H1 (cell line): ENCODE measurements at regions of chr11 and their contacts with region 1.

Region 1: GRCh38 chr11:44804449-44805437 is 78.0 kb downstream of the TSPAN18 start:
- DNase-seq: no peak
- H3K4me3 ChIP-seq: no peak overlapping the region
- H3K27ac ChIP-seq: no peak overlapping the region
- H3K4me1 ChIP-seq: peaks cover 0 to 17% (median 11%) of the 10 kb centered on the region in 4 experiments; a peak in 5 of 7 replicates
- H3K27me3 ChIP-seq: 0 out of 7 replicates have a peak, but pooled peaks cover 0 to 2% (median 0%) of the 10 kb centered on the region in 4 experiments
- CTCF ChIP-seq: no peak
- EP300 ChIP-seq: no peak
- POLR2A ChIP-seq: no peak
- RAD21 ChIP-seq: no peak

Region 2: GRCh38 chr11:44793350-44794090 is 11.2 kb before region 1 on chr11:
- CTCF ChIA-PET with region 1: interaction called, 11 read pairs
- POLR2A ChIA-PET with region 1: interaction called, 3 read pairs
- DNase-seq: no peak
- H3K4me3 ChIP-seq: no peak overlapping the region
- H3K27ac ChIP-seq: no peak overlapping the region
- H3K4me1 ChIP-seq: peaks cover 10 to 23% (median 17%) of the 10 kb centered on the region in 4 experiments
- H3K27me3 ChIP-seq: peaks cover 0 to 4% (median 0%) of the 10 kb centered on the region in 4 experiments; a peak in 1 of 7 replicates
- CTCF ChIP-seq: no peak
- EP300 ChIP-seq: no peak
- POLR2A ChIP-seq: no peak
- RAD21 ChIP-seq: no peak